ENCODE measurements at regions of chr2 and their contacts with region 1.

Region 1: DNA sequence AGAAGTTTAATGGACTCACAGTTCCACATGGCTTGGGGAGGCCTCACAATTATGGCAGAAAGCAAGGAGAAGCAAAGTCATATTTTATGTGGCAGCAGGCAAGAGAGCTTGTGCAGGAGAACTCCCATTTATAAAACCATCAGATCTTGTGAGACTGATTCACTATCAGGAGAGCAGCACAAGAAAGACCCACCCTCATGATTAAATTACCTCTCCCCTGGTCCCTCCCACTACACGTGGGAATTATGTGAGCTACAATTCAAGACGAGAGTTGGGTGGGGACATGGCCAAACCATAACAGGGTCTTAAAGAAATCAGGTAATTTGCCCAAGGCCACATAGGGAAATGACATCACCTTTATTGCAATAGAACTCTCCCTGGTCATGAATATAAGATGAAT is 1073.3 kb upstream of the ACVR2A start:
- DNase-seq: no peak
- ATAC-seq: no peak
- H3K4me3 ChIP-seq: no peak overlapping the region
- H3K27ac ChIP-seq: no peak overlapping the region
- H3K4me1 ChIP-seq: no peaks in the 10 kb centered on the region
- H3K27me3 ChIP-seq: no peaks in the 10 kb centered on the region
- CTCF ChIP-seq: no peak
- EP300 ChIP-seq: no peak
- POLR2A ChIP-seq: no peak
- RAD21 ChIP-seq: no peak

Region 2: GRCh38 chr2:146661473-146662096 is 109.9 kb before region 1 on chr2:
- CTCF ChIA-PET with region 1: no interaction called
- POLR2A ChIA-PET with region 1: no interaction called
- RAD21 ChIA-PET with region 1: no interaction called
- SMC1A ChIA-PET with region 1: no interaction called
- in situ Hi-C with region 1: no loop called
- intact Hi-C with region 1: no loop called
- DNase-seq: no peak
- ATAC-seq: no peak
- H3K4me3 ChIP-seq: no peak overlapping the region
- H3K27ac ChIP-seq: no peak overlapping the region
- H3K4me1 ChIP-seq: no peaks in the 10 kb centered on the region
- H3K27me3 ChIP-seq: no peaks in the 10 kb centered on the region
- CTCF ChIP-seq: peak; percentile 38 to 45 (median 42); a peak in 5 of 6 replicates
- EP300 ChIP-seq: no peak
- POLR2A ChIP-seq: no peak
- RAD21 ChIP-seq: peak; percentile 66

Region 3: GRCh38 chr2:146785101-146785500 is 13.6 kb after region 1 on chr2:
- CTCF ChIA-PET with region 1: interaction called, 3 read pairs
- POLR2A ChIA-PET with region 1: interaction called, 5 read pairs
- RAD21 ChIA-PET with region 1: no interaction called
- SMC1A ChIA-PET with region 1: interaction called, 15 read pairs
- in situ Hi-C with region 1: no loop called
- intact Hi-C with region 1: no loop called
- DNase-seq: no peak
- ATAC-seq: no peak
- H3K4me3 ChIP-seq: no peak overlapping the region
- H3K27ac ChIP-seq: no peak overlapping the region
- H3K4me1 ChIP-seq: no peaks in the 10 kb centered on the region
- H3K27me3 ChIP-seq: no peaks in the 10 kb centered on the region
- CTCF ChIP-seq: no peak
- EP300 ChIP-seq: no peak
- POLR2A ChIP-seq: no peak
- RAD21 ChIP-seq: no peak

Measured in GM12878 (cell line).